ENCODE measurements at regions of chr17 and their contacts with region 1.

Region 1: GRCh38 chr17:61986898-61987297 is 59.1 kb upstream of the INTS2 start:
- DNase-seq: no peak
- ATAC-seq: no peak
- H3K4me3 ChIP-seq: no peak overlapping the region
- H3K27ac ChIP-seq: no peak overlapping the region
- H3K4me1 ChIP-seq: peaks cover 0 to 13% (median 0%) of the 10 kb centered on the region in 9 donors
- H3K27me3 ChIP-seq: no peaks in the 10 kb centered on the region
- CTCF ChIP-seq: no peak

Region 2: GRCh38 chr17:61942085-61942484 is 44.8 kb before region 1 on chr17:
- intact Hi-C with region 1: loop called in 1 of 10 experiments (anchors 5 kb)
- DNase-seq: no peak
- ATAC-seq: no peak
- H3K4me3 ChIP-seq: no peak overlapping the region
- H3K27ac ChIP-seq: peak overlapping the region in 1 of 10 donors; percentile 8
- H3K4me1 ChIP-seq: no peaks in the 10 kb centered on the region
- H3K27me3 ChIP-seq: no peaks in the 10 kb centered on the region
- CTCF ChIP-seq: no peak